ENCODE measurements at regions of chr1 and their contacts with region 1.

Region 1: DNA sequence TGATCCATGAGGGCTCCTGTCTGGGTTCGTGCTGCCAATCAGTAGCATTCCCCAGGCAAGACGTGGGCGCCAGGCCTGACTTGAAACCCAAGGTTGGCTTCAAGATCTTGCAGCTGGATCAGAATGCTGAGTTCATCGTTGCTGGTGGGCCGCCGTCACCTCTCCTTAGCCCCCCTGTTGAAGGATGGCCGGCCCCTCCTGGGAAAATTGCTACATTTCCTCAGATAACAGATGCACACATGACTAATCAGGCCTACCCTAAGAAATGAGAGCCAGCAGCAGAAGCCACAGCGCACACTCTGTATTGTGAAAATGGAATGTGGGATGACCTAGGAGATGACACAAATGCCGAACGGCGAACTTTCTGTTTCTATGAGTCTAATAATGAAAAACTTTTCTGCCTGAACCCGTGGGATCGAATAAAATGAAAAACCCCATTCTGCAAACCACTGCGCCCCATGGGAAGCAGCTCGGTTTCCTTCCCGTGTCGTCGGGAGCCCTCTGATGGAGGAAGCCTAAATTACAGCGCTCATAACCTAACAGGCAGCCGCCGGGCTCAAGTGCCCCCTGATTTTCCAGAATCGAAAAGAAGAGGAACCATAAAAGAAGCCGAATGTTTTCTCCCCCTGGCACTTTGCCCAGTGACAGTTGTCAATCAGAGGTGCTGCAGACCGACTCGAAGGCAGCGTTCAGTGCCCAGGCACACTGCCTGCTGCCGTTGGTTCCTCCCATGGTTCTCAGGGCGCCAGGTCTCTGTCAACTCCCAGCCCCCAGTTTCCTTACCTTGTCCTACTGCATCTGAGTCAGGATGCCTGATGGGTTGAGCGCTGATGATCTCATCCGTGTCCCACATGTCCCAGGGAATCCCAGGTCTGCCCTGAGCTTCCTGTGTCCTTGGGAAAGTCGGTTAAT is 38.2 kb upstream of the H6PD start:
- DNase-seq: peak; percentile 66
- H3K4me3 ChIP-seq: no peak overlapping the region
- H3K27ac ChIP-seq: no peak overlapping the region
- H3K4me1 ChIP-seq: peaks cover 35% of the 10 kb centered on the region
- H3K27me3 ChIP-seq: no peaks in the 10 kb centered on the region
- CTCF ChIP-seq: peak; percentile 67 to 74

Region 2: GRCh38 chr1:8910914-8911313 is 285.5 kb before region 1 on chr1:
- CTCF ChIA-PET with region 1: no interaction called
- dilution Hi-C with region 1: no loop called
- in situ Hi-C with region 1: loop called in 1 of 2 experiments (anchors 25 kb)
- intact Hi-C with region 1: loop called (anchors 5 kb)
- DNase-seq: peak; percentile 63
- H3K4me3 ChIP-seq: no peak overlapping the region
- H3K27ac ChIP-seq: peak overlapping the region; percentile 17
- H3K4me1 ChIP-seq: peaks cover 21% of the 10 kb centered on the region
- H3K27me3 ChIP-seq: no peaks in the 10 kb centered on the region
- CTCF ChIP-seq: no peak

Region 3: DNA sequence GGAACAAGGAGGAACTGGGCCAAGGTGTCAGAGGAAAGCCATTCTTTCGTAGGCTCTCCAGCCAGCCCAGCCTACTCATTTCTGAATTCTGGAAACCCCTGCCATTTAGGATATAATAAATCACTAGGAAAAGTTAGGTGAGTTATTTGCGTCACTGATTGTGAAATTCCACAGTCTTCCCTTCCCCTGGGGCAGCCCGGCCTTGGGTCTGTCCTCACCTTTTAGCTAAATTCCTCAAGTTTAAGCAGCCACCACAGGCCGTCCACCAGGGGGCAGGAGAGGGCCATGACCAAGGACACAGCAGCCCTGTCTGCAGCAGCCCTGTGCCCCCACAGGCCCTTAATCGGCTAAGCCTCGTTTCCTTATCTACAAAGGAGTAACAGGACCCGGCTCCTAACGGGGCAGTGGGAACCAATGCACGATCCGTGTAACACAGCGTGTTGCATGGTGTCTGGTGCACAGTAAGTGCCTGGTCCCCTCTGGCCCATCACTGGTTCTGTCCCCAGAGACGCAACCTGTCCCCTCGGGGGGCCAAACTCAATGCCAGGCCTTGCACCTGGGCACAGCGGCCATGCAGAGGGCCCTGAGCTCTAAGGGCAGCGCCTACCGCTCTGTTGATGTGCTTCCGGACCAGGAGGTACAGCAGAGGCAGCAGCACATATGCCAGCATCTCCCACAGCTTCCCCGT is 85.6 kb before region 1 on chr1:
- CTCF ChIA-PET with region 1: interaction called, 3 read pairs
- dilution Hi-C with region 1: no loop called
- in situ Hi-C with region 1: no loop called
- intact Hi-C with region 1: loop called (anchors 1 kb)
- DNase-seq: peak; percentile 97
- H3K4me3 ChIP-seq: no peak overlapping the region
- H3K27ac ChIP-seq: no peak overlapping the region
- H3K4me1 ChIP-seq: peaks cover 13% of the 10 kb centered on the region
- H3K27me3 ChIP-seq: no peaks in the 10 kb centered on the region
- CTCF ChIP-seq: peak; percentile 87 to 93

Region 4: GRCh38 chr1:9145021-9145668 is 51.2 kb before region 1 on chr1:
- CTCF ChIA-PET with region 1: no interaction called
- dilution Hi-C with region 1: no loop called
- in situ Hi-C with region 1: no loop called
- intact Hi-C with region 1: loop called (anchors 1 kb)
- DNase-seq: peak; percentile 23
- H3K4me3 ChIP-seq: no peak overlapping the region
- H3K27ac ChIP-seq: no peak overlapping the region
- H3K4me1 ChIP-seq: peaks cover 5% of the 10 kb centered on the region
- H3K27me3 ChIP-seq: no peaks in the 10 kb centered on the region
- CTCF ChIP-seq: no peak

Region 5: GRCh38 chr1:9181176-9181906 is 15.0 kb before region 1 on chr1:
- CTCF ChIA-PET with region 1: interaction called, 3 read pairs
- dilution Hi-C with region 1: no loop called
- in situ Hi-C with region 1: no loop called
- intact Hi-C with region 1: loop called (anchors 1 kb)
- DNase-seq: peak; percentile 52
- H3K4me3 ChIP-seq: peak overlapping the region; percentile 92 to 98 (median 94)
- H3K27ac ChIP-seq: peak overlapping the region; percentile 91
- H3K4me1 ChIP-seq: peaks cover 27% of the 10 kb centered on the region
- H3K27me3 ChIP-seq: no peaks in the 10 kb centered on the region
- CTCF ChIP-seq: peak; percentile 84 to 96

Measured in mammary epithelial cell (primary cell).